ENCODE measurements at regions of chr9 and their contacts with region 1.

Region 1: DNA sequence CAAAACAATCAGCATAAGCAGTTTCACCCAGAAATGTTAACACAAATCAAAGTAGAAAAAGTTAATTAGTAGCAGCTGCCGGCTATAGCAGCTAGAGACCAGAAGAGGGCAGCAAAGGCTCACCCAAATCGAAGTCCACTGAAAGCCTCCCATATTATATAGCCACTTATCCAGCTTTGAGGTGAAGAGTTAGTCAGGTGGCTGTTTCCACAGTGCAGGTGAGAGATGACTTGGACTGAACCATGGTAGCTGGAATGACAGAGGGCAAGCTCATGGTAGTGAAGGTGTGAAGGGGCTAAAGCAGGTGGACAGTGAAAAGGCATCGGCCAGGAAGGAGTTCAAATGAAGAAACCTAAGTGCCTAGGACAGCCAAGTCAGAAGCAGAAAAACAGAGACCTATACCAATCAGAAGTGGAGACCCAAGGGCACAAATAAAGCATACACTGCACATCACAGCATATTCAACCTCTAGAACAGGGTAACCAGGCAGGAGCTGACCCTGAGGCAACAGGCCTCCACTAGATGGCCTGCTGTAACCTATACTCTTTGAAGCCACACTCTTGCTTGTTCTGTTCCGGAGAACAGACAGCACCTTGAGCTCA is 7.2 kb upstream of the RNF38 start:
- DNase-seq: peak; percentile 31
- ATAC-seq: peak; percentile 93
- H3K4me3 Mint-ChIP-seq: no peak overlapping the region
- H3K27ac Mint-ChIP-seq: peak overlapping the region; percentile 37
- H3K4me1 Mint-ChIP-seq: peaks cover 10% of the 10 kb centered on the region
- H3K27me3 Mint-ChIP-seq: no peaks in the 10 kb centered on the region
- CTCF ChIP-seq: peak; percentile 97

Region 2: GRCh38 chr9:35996358-35996975 is 410.8 kb before region 1 on chr9:
- CTCF ChIA-PET with region 1: no interaction called
- POLR2A ChIA-PET with region 1: no interaction called
- intact Hi-C with region 1: no loop called
- DNase-seq: no peak
- ATAC-seq: no peak
- H3K4me3 Mint-ChIP-seq: no peak overlapping the region
- H3K27ac Mint-ChIP-seq: no peak overlapping the region
- H3K4me1 Mint-ChIP-seq: no peaks in the 10 kb centered on the region
- H3K27me3 Mint-ChIP-seq: peaks cover 35% of the 10 kb centered on the region
- CTCF ChIP-seq: no peak

Region 3: DNA sequence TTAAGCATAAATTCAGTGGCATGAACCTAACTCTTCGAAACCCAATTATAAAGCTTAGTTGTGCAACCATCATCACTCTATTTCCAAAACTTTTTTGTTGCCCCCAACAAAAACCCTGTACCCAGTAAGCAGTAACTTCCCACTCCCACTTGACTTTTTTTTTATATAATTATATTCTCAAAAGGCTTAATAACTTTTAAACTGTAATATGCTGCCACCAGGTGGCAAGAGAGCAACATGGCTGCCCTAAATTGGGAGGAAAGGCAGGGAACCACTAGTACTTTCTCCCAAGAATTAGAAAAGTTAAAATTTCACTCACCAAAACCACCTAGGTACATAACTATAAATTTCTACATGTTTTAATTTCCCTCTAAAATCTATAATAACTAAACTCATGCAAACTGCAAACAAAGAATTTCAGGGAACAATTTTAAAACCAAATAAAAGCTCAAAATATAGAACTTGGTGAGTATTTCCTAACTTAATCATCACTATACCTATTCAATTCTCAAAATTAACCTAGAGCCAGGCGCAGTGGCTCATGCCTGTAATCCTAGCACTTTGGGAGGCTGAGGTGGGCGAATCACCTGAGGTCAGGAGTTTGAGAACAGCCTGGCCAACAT is 43.0 kb after region 1 on chr9:
- CTCF ChIA-PET with region 1: interaction called, 25 read pairs
- POLR2A ChIA-PET with region 1: no interaction called
- intact Hi-C with region 1: loop called (anchors 1 kb)
- DNase-seq: no peak
- ATAC-seq: no peak
- H3K4me3 Mint-ChIP-seq: no peak overlapping the region
- H3K27ac Mint-ChIP-seq: no peak overlapping the region
- H3K4me1 Mint-ChIP-seq: peaks cover 4% of the 10 kb centered on the region
- H3K27me3 Mint-ChIP-seq: no peaks in the 10 kb centered on the region
- CTCF ChIP-seq: no peak

Region 4: DNA sequence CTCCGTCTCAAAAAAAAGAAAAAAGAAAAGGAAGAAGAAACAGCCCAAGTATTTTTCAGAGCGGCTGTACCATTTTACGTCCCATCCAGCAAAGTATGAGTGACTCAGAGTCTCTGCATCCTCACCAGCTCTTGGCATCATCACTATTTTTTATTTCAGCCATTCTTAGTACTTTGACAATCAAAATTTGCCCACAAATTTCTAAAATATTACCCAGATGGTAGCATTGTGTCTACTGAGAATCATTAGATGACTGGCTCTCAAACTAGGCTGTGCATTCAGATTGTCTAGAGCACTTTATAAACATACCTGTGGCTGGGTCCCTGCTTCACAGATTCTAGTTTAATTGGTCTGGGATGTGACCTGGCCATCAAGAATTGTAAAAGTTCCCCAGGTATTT is 143.9 kb after region 1 on chr9:
- CTCF ChIA-PET with region 1: interaction called, 181 read pairs
- POLR2A ChIA-PET with region 1: interaction called, 5 read pairs
- intact Hi-C with region 1: loop called (anchors 1 kb)
- DNase-seq: no peak
- ATAC-seq: no peak
- H3K4me3 Mint-ChIP-seq: no peak overlapping the region
- H3K27ac Mint-ChIP-seq: no peak overlapping the region
- H3K4me1 Mint-ChIP-seq: no peaks in the 10 kb centered on the region
- H3K27me3 Mint-ChIP-seq: peaks cover 6% of the 10 kb centered on the region
- CTCF ChIP-seq: no peak

Region 5: DNA sequence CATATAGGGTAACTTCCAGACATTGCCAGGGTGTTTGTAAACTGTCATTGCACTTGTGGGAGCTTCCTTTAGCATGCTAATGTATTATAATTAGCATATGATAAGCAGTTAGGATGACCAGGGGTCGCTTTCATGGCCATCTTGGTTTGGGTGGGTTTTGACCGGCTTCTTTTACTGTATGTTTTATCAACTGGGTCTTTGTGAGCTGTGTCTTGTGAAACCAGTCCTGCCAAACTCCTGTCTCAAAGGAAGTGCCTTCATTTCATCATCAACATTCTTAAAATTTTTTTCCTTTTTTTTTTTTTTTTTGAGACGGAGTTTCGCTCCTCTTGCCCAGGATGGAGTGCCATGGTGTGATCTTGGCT is 153.6 kb after region 1 on chr9:
- CTCF ChIA-PET with region 1: interaction called, 181 read pairs
- POLR2A ChIA-PET with region 1: interaction called, 5 read pairs
- intact Hi-C with region 1: no loop called
- DNase-seq: no peak
- ATAC-seq: no peak
- H3K4me3 Mint-ChIP-seq: no peak overlapping the region
- H3K27ac Mint-ChIP-seq: no peak overlapping the region
- H3K4me1 Mint-ChIP-seq: no peaks in the 10 kb centered on the region
- H3K27me3 Mint-ChIP-seq: no peaks in the 10 kb centered on the region
- CTCF ChIP-seq: no peak

Region 6: DNA sequence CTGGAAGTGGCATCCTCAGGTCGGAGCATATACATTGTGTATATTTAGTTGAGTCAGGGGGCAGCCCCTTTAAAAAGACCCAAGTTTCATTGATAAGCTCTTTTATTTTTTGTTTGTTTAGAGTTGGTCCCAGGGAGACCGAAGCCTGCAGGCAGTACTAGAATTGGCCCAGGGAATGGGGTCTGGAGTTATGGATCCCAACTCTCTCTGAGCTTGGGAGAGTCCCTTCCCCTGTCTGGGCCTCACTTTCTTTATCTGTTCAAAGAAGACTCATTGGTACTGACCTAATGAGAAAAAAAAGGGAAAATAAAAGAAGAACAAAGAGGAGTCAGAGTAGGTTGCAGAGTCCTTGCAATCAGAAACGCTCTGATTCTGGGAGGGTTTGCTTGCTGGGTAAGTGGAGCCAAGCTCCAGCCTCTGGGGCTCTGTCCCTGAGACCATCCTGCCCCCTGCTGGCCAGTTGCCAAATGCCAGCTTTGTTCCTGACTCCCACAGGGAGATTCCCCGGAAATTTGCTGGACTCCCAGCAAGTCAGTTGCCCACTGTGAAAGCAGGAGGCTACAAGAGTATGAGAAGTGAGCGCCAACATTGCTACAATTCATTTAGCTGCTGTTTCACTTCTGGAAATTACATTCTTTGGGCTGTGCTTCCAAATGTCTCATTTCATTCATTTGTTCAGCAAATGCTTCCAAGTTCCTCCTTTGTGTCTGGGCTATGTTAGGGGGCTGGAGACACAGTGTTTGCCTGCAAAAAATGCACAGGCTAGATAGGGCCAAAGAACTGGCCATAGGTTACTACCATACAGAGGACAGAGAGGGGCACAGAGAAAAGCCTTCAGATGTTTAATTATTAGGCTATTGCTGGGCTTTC is 321.7 kb after region 1 on chr9:
- CTCF ChIA-PET with region 1: interaction called, 42 read pairs
- POLR2A ChIA-PET with region 1: interaction called, 3 read pairs
- intact Hi-C with region 1: loop called (anchors 1 kb)
- DNase-seq: peak; percentile 55
- ATAC-seq: peak; percentile 70
- H3K4me3 Mint-ChIP-seq: no peak overlapping the region
- H3K27ac Mint-ChIP-seq: peak overlapping the region; percentile 27
- H3K4me1 Mint-ChIP-seq: peaks cover 14% of the 10 kb centered on the region
- H3K27me3 Mint-ChIP-seq: no peaks in the 10 kb centered on the region
- CTCF ChIP-seq: peak; percentile 93